Right ventricle myocardium inferior (tissue), 1 donor: ENCODE measurements at regions of chr10 and their contacts with region 1.

Region 1: DNA sequence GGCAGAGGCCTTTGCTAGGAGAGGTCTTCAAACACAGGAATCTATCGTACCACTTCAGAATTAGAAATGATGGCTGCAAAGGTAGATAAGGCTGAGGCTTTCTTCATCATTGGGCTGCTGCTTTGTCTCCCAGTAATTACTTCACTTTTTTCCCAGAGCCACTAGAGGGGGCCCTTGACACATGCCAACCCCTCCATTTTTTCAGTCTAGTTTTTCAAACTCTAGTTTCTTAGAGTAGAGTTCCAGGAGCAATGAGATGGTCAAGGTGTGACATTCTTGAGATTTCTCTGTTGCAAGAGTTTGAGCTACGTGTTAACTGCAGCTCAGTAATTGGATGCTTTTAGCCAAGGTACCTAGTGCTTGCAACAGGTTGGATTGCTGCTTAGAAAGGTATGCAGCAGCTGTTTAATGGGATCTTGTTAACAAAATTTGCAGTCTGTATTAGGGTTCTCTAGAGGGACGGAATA is 33.8 kb upstream of the RBM20 start:
- DNase-seq: no peak
- ATAC-seq: peak; percentile 62

Region 2: DNA sequence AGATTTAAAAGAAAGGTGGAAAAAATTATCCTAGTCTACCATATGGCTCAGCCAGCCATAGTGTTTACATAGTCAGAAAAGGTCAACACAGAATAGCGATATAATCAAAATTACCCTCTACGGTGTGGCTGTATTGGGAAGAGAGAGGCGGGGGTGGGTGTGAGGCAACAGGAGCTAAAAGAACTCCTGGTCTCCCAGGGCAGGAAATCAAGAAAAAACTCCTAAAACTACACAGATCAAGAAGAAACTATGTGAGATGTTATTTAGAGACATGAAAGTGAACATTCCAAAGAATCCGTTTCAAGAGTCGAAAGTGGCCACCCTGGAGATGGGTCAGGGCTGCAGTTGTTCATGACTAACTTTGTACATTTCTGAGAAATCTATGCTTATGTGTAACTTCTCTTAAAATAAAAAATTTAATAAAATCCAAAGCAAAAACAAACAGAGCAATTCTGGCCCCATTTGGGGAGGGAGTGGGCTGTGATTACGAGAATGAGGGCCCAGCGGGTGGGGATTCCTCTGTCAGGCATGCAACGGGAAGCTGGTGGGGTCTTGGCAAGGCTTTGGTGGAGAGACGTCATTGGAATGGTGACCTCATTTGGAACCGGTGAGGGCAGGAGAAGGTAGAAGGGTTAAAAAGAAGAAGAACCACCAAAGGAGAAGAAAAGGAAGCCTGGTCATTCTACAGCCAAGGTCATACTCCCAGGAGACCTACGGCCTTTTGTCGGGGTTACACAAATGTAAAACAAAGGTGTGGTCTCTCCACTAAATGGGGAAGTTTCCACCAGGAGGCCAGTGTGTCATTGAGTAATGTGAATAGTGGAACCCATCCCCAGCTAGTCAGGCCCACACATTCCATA is 183.8 kb before region 1 on chr10:
- intact Hi-C with region 1: no loop called
- DNase-seq: no peak
- ATAC-seq: no peak

Region 3: DNA sequence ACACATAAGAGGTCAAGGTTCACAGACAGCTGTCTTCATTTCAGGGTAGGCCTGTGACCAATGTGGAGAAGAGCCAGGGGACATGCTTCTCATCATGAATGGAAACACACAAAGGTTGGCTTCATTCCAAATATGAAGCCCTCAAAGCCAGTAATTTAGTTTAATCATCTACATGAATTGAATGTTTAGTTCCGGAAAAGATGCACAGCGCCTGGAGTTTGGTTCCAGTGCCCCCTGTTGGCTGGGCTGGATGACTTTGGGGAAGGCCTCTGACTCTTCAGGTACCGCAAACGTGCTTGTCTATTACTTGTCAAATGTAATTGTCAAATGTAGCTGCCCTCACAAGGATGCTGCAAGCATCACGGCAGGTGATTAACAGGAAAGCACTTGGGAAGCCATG is 597.2 kb after region 1 on chr10:
- intact Hi-C with region 1: loop called (anchors 10 kb)
- DNase-seq: no peak
- ATAC-seq: no peak